AG04450 (cell line): ENCODE measurements at regions of chr15 and their contacts with region 1.

Region 1: GRCh38 chr15:47890409-47891150 is 173.3 kb downstream of the SEMA6D start:
- DNase-seq: no peak
- H3K4me3 ChIP-seq: no peak overlapping the region
- H3K27ac ChIP-seq: no peak overlapping the region
- H3K27me3 ChIP-seq: no peaks in the 10 kb centered on the region
- CTCF ChIP-seq: no peak

Region 2: GRCh38 chr15:46127361-46127874 is 1763.2 kb before region 1 on chr15:
- CTCF ChIA-PET with region 1: interaction called, 12 read pairs
- POLR2A ChIA-PET with region 1: no interaction called
- DNase-seq: peak; percentile 70
- H3K4me3 ChIP-seq: no peak overlapping the region
- H3K27ac ChIP-seq: peak overlapping the region; percentile 85
- H3K27me3 ChIP-seq: no peaks in the 10 kb centered on the region
- CTCF ChIP-seq: no peak